ENCODE measurements at regions of chr3 and their contacts with region 1.

Region 1: GRCh38 chr3:46866720-46867549 is 3.7 kb upstream of the MYL3 start:
- DNase-seq: no peak
- H3K4me3 ChIP-seq: no peak overlapping the region
- CTCF ChIP-seq: peak; percentile 91

Region 2: DNA sequence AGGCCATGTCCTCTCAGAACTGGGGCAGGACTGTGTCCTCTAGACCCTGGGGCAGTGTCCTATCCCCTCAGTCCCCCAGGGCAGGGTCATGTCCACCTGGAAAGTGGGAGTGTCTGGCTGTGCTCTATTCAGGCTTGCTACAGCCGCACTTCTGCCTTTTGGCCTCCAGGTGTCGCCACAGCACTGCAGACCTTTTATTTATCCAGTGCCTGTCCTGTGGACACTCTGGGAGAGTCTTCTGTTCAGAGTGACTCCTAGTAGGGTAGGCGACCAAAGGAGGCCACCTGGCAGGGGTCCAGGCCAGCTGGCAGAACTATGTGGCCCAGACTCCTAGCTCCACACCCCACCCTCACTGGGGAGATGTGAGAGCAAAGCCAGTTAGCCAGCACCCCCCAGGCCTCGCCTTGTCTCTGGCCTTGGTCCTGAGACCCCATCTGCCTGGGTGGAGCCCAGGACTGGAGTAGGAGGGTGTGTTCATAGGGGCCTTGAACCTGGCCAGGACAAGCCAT is 161.9 kb before region 1 on chr3:
- CTCF ChIA-PET with region 1: interaction called, 11 read pairs
- POLR2A ChIA-PET with region 1: no interaction called
- DNase-seq: no peak
- H3K4me3 ChIP-seq: no peak overlapping the region
- CTCF ChIP-seq: peak; percentile 93

Region 3: DNA sequence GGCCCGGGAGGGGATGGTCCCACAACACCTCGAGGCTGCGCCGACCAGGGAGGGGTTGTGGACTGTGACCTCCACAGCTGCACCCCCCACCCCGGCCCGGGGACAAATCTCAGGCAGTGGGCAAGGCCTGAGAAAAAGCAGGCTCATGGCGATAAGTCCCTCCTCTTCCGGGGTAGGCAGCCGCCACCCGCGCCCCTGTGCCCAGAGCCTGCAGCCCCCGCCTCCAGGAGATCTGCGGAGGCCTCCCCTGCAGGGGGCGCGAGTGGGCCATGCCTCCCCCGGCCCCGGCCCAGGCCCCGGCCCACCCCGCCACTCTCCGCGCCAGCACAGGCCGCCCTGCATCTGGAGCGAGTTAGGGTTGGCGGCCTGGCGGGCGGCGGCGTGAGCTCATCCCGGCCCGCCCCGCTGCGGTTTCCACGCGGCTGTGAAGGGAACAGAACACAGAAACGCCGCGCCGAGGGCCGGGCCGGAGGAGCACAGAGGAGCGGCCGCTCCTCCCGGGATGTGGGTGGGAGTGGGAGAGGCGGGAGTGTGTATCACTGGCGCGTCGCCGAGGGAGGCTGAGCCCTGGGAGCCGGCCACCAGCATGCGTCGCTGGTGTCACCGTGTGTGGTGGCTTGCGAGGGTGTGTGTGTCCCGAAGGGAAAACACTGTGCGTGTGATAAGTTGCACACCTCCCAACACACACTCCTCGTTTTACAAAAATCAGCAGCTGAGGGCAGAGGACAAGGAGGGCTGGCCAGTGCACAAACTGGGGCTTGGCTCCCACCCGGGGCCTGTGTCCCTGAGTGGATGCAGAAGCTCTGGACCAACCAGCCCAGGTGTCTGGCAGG is 20.9 kb before region 1 on chr3:
- CTCF ChIA-PET with region 1: interaction called, 70 read pairs
- POLR2A ChIA-PET with region 1: no interaction called
- DNase-seq: no peak
- H3K4me3 ChIP-seq: peak overlapping the region; percentile 45
- CTCF ChIP-seq: peak; percentile 67

Region 4: GRCh38 chr3:46882377-46883053 is 15.6 kb after region 1 on chr3:
- CTCF ChIA-PET with region 1: interaction called, 110 read pairs
- POLR2A ChIA-PET with region 1: interaction called, 3 read pairs
- DNase-seq: no peak
- H3K4me3 ChIP-seq: peak overlapping the region; percentile 59
- CTCF ChIP-seq: no peak

Region 5: GRCh38 chr3:46895204-46895660 is 28.3 kb after region 1 on chr3:
- CTCF ChIA-PET with region 1: interaction called, 110 read pairs
- POLR2A ChIA-PET with region 1: no interaction called
- DNase-seq: no peak
- H3K4me3 ChIP-seq: no peak overlapping the region
- CTCF ChIP-seq: peak; percentile 88

Region 6: GRCh38 chr3:46903331-46904071 is 36.6 kb after region 1 on chr3:
- CTCF ChIA-PET with region 1: interaction called, 52 read pairs
- POLR2A ChIA-PET with region 1: no interaction called
- DNase-seq: no peak
- H3K4me3 ChIP-seq: no peak overlapping the region
- CTCF ChIP-seq: no peak

Region 7: DNA sequence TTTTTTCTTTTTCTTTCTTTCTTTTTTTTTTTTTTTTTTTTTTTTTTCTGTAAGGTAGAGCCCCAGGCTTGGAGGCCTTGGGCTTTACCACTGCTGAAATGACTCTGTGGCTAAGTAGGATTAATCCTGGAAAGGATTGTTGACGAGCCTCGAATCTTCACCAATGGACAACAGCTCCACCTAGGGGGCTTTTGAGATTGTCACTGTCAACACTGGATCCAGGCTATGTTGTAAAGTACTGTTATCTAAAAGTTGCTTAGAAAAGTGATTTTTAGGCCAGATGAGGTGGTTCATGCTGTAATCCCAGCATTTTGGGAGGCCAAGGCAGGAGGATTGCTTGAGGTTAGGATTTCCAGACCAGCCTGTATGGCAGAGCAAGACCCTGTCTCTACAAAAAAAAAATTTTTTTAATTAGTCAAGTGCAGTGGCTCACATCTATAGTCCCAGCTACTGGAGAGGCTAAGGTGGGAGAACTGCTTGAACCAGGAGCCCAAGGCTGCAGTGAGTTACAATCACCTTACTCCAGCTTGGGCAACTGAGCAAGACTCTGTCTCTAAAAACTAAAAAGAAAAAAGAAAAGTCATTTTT is 457.4 kb after region 1 on chr3:
- CTCF ChIA-PET with region 1: interaction called, 14 read pairs
- POLR2A ChIA-PET with region 1: no interaction called
- DNase-seq: no peak
- H3K4me3 ChIP-seq: no peak overlapping the region
- CTCF ChIP-seq: peak; percentile 74